Left cardiac atrium (tissue), 4 donors: ENCODE measurements at regions of chr5 and their contacts with region 1.

Region 1: GRCh38 chr5:53481887-53482716 is 1.7 kb downstream of the FST start:
- DNase-seq: peak; percentile 84
- ATAC-seq: peak; percentile 70 to 87

Region 2: GRCh38 chr5:53378590-53379247 is 103.4 kb before region 1 on chr5:
- intact Hi-C with region 1: no loop called
- DNase-seq: no peak
- ATAC-seq: no peak

Region 3: GRCh38 chr5:53871050-53871449 is 388.9 kb after region 1 on chr5:
- intact Hi-C with region 1: loop called in 1 of 2 experiments (anchors 2 kb)
- DNase-seq: no peak
- ATAC-seq: no peak

Region 4: DNA sequence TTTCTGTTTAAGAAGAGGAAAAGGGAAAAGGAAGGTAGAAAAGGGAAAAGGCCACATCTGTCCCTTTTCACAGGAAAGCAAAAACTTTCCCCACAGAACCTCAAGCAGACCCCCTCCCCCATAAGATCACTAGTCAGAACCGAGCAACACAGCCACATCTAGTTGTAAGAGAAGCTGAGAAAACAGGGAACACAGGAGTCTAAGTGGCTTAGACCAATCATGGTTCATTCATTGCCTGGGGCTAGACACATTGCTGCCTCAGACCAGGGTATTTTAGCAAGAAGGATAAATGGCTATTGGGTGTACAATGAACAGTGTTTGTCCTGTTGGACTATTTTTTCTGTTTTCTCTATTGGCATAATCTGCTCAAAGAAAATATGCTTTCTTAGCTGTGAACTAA is 730.2 kb after region 1 on chr5:
- intact Hi-C with region 1: loop called in 1 of 2 experiments (anchors 5 kb)
- DNase-seq: no peak
- ATAC-seq: no peak

Region 5: GRCh38 chr5:54217826-54218503 is 735.9 kb after region 1 on chr5:
- intact Hi-C with region 1: loop called (anchors 2 to 5 kb)
- DNase-seq: no peak
- ATAC-seq: peak; percentile 79 to 83